ENCODE measurements at regions of chr11 and their contacts with region 1.

Region 1: DNA sequence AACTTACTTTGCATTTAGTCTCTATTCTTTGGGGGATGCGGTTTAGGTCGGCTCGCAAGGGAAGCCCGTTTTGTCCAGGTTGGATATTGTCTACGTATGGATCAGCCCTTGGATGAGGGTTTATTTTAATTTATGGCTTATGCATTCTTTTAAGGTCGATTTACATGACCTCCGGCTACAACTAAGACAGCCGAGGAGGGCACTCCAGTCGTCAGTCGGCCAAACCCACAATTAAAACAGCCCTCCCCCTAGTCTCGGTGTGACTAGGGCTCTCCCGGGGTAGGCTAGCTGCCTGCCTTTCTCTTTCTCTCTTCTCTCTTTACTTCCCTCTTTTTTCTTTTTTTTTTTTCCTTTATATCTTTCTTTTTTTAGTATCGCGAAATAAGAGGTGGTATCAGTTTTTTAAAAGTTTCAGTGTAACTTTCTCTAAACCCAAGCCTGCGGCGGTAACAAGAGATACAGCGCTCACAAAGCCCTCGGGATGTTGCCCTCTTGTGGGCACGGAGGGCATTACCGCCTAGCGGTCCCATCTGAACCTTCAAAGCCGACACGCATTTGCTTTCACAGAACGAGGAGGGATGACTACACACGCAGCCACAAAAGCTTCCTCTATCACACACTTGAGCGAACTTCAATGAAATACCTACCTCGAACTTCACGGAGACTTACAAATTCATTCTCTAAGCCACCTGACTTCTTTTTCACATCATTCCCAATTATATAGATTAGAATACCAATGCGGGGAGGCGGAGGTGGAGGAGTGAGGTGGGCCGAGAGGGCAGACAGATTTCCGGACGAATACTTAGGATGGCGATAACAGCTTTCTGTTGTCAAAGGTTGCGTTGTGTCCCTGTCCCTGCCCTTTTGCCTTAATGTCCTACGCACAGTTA is 132.3 kb upstream of the C11orf58 start:
- DNase-seq: peak; percentile 96
- ATAC-seq: peak; percentile 40
- H3K4me3 ChIP-seq: peak overlapping the region; percentile 67
- H3K27ac ChIP-seq: peak overlapping the region; percentile 93
- H3K4me1 ChIP-seq: peaks cover 10% of the 10 kb centered on the region
- H3K27me3 ChIP-seq: no peaks in the 10 kb centered on the region
- CTCF ChIP-seq: peak; percentile 97
- POLR2A ChIP-seq: peak; percentile 23; the same call in 1 of the 2 replicates
- RAD21 ChIP-seq: peak; percentile 93

Region 2: DNA sequence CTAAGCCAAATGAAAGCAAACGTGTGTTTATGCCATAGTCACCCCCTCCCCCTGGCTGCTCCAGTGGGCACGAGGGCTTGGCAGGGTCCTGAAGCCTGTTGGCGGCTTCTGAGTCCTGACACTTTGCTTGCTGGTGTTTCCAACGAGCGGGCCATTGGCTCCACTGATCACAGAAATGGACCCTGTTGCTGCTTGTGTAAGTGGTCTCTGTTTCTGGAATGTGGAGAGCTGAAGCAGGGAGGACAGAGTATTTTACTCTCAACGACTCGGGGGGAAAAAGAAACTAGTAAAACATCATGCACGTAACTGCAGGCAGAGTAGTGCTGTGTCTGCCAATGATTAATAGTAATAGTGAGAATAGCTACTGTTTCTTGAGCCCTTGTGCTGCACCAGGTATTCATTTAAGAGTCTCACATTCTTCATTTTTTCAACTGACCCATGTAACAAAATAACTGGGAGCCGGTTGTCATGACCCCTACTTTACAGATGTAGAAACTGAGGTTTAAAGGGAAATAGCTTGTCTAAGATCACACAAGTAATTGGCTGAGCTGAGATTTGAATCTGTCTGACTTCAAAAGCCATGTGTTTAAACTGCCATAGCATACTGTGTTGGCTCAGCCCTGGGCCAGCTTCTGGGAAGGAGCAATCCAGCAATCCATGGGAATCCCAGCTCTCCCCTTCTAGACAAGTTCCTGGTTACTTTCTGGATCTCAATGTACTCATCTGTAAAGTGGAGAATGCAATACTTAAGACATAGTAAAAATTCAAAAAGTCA is 964.7 kb before region 1 on chr11:
- CTCF ChIA-PET with region 1: no interaction called
- POLR2A ChIA-PET with region 1: no interaction called
- dilution Hi-C with region 1: no loop called
- in situ Hi-C with region 1: loop called (anchors 5 kb)
- intact Hi-C with region 1: no loop called
- DNase-seq: no peak
- ATAC-seq: no peak
- H3K4me3 ChIP-seq: peak overlapping the region; percentile 19
- H3K27ac ChIP-seq: no peak overlapping the region
- H3K4me1 ChIP-seq: peaks cover 1% of the 10 kb centered on the region; the same call in 1 of the 2 replicates
- H3K27me3 ChIP-seq: peaks cover 3% of the 10 kb centered on the region
- CTCF ChIP-seq: no peak
- POLR2A ChIP-seq: no peak
- RAD21 ChIP-seq: no peak

Region 3: GRCh38 chr11:15893080-15893492 is 713.1 kb before region 1 on chr11:
- CTCF ChIA-PET with region 1: no interaction called
- POLR2A ChIA-PET with region 1: interaction called, 22 read pairs
- dilution Hi-C with region 1: no loop called
- in situ Hi-C with region 1: no loop called
- intact Hi-C with region 1: loop called (anchors 2 kb)
- DNase-seq: peak; percentile 89
- ATAC-seq: peak; percentile 77
- H3K4me3 ChIP-seq: no peak overlapping the region
- H3K27ac ChIP-seq: peak overlapping the region; percentile 88
- H3K4me1 ChIP-seq: peaks cover 44% of the 10 kb centered on the region
- H3K27me3 ChIP-seq: no peaks in the 10 kb centered on the region
- CTCF ChIP-seq: no peak
- POLR2A ChIP-seq: no peak
- RAD21 ChIP-seq: no peak; the same call in 1 of the 2 replicates

Region 4: DNA sequence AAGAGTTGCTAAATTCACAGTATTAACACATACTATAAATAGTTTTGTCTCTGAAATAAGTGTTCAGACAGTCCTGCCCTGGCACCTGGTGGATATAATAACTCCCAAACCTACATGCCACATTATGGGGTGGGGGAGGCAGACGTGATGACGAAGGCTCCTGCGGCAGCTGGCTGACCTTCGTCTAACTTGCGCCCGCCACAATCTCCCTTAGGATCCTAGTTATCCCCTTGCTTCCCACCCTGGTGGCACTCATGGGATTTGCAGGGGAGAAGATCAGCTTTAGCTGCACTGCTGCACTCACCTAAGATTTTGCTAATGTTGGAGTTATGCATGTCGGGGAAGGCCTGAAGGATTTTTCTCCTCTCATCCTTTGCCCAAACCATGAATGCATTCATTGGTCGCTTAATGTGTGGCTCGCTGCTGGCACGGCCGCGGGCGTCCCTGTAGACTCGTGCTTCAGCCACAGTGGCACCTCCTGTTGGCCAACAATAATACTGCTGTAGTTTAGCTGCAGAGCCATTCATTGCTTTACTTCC is 617.4 kb before region 1 on chr11:
- CTCF ChIA-PET with region 1: no interaction called
- POLR2A ChIA-PET with region 1: interaction called, 12 read pairs
- dilution Hi-C with region 1: no loop called
- in situ Hi-C with region 1: loop called (anchors 10 kb)
- intact Hi-C with region 1: no loop called
- DNase-seq: no peak
- ATAC-seq: no peak
- H3K4me3 ChIP-seq: no peak overlapping the region
- H3K27ac ChIP-seq: peak overlapping the region; percentile 73; the same call in 1 of the 2 replicates
- H3K4me1 ChIP-seq: peaks cover 22% of the 10 kb centered on the region
- H3K27me3 ChIP-seq: no peaks in the 10 kb centered on the region
- CTCF ChIP-seq: no peak
- POLR2A ChIP-seq: no peak
- RAD21 ChIP-seq: 0 out of 2 replicates have a peak, but pooled peaks have one; percentile 24

Region 5: DNA sequence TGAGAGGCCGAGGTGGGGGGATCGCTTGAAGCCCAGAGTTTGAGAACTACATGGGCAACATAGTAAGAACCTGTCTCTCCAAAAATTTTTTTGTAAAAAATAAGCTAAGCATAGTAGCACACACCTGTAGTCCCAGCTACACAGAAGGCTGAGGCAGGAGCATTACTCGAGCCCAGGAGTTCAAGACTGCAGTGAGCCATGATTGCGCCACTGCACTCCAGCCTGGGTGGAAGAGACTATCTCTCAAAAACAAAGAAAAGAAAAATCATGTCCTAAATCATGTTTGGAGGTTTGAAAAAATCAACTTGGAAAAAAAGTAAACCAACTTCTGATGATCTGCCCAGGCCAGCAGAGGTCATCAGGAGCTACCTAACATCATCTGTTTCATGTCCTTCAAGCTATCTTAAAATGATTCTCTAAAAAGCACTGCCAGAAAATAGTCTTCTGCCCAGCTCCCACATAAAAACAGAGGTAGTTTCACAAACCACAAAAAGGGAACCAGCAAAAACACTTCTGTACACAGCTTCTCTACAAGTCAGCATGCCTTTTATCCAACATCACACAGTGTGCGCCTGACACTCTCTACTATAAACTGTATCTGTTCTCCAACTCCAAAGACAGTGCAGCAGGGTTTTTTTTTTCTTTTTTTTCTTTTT is 414.8 kb before region 1 on chr11:
- CTCF ChIA-PET with region 1: no interaction called
- POLR2A ChIA-PET with region 1: no interaction called
- dilution Hi-C with region 1: no loop called
- in situ Hi-C with region 1: no loop called
- intact Hi-C with region 1: loop called (anchors 1 kb)
- DNase-seq: peak; percentile 18
- ATAC-seq: no peak
- H3K4me3 ChIP-seq: no peak overlapping the region
- H3K27ac ChIP-seq: no peak overlapping the region
- H3K4me1 ChIP-seq: peaks cover 5% of the 10 kb centered on the region
- H3K27me3 ChIP-seq: no peaks in the 10 kb centered on the region
- CTCF ChIP-seq: no peak
- POLR2A ChIP-seq: no peak
- RAD21 ChIP-seq: no peak

Region 6: DNA sequence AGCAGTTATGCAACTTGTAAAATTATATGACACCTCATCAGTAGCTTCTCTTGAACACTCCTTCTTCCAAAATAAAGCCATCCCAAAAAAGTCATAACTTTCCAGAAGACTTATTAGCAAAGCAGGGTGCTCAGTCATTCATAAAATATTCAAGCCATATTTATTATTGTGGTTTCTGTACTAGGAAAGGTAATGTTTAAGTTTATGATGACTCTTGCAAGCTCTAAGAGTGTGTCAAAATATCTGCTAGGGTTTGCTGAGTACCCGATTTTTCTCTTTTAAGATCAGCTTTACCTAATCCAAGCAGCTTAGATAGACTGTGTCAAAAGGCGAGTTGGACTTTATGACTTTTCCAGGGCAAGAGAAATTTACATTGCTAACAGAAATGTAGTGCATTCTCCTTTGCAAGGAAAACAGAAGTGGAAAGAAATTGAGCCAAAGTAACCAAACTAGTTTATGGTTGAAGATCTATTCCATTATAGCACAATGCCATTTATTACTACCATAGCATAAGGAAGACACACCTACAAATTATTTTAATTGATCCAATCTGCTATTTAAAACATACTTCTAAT is 151.8 kb before region 1 on chr11:
- CTCF ChIA-PET with region 1: no interaction called
- POLR2A ChIA-PET with region 1: no interaction called
- dilution Hi-C with region 1: no loop called
- in situ Hi-C with region 1: no loop called
- intact Hi-C with region 1: loop called (anchors 5 kb)
- DNase-seq: peak; percentile 55
- ATAC-seq: peak; percentile 61
- H3K4me3 ChIP-seq: no peak overlapping the region
- H3K27ac ChIP-seq: no peak overlapping the region
- H3K4me1 ChIP-seq: peaks cover 5% of the 10 kb centered on the region; the same call in 1 of the 2 replicates
- H3K27me3 ChIP-seq: no peaks in the 10 kb centered on the region
- CTCF ChIP-seq: no peak
- POLR2A ChIP-seq: no peak
- RAD21 ChIP-seq: no peak

Measured in IMR-90 (cell line).